GM10248 (cell line): ENCODE measurements at regions of chr13 and their contacts with region 1.

Region 1: GRCh38 chr13:36981156-36981743 is 17.9 kb downstream of the ALG5 start:
- DNase-seq: peak; percentile 35
- CTCF ChIP-seq: peak; percentile 52

Region 2: GRCh38 chr13:36420437-36420891 is 560.8 kb before region 1 on chr13:
- CTCF ChIA-PET with region 1: interaction called, 16 read pairs
- POLR2A ChIA-PET with region 1: no interaction called
- DNase-seq: peak; percentile 63
- CTCF ChIP-seq: peak; percentile 83

Region 3: DNA sequence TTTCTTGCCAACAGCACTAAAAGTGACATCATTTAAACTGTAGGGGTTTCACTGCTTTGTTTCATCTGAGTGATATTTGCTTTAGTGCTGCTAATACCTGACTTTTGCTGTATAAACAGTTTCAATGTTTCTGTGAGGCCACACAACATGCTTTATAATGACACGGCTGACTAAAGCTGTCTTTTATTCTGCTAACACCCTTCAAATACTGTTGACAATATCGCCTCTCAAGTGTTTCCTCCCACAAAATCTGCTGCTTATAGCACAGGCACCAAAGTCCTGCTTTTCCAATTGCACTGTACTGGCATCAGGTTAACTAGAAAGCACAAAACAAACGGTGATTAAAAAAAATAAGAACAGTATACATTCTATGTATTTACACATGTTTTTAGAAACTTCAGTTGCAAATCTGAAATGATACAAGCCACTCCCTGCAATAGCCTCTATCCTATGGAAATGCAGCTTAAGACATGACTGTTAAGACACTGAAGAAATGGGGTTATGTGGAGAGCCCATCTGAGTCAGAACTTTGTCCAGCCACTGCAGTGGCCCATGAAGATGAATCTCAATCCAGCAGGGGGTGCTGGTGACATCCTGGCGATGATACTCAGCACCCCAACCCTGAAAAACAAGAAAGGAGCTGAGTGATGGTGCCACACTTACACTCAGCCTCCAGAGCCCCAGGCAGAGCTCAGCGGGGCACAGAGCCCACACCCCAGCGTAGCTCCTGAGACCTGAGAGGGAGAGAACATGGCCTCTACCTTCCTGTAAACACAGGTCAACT is 132.9 kb before region 1 on chr13:
- CTCF ChIA-PET with region 1: interaction called, 16 read pairs
- POLR2A ChIA-PET with region 1: no interaction called
- DNase-seq: no peak
- CTCF ChIP-seq: peak; percentile 21

Region 4: GRCh38 chr13:36858290-36858689 is 123.0 kb before region 1 on chr13:
- CTCF ChIA-PET with region 1: interaction called, 24 read pairs
- POLR2A ChIA-PET with region 1: no interaction called
- DNase-seq: peak; percentile 39
- CTCF ChIP-seq: peak; percentile 55

Region 5: GRCh38 chr13:36965773-36966172 is 15.5 kb before region 1 on chr13:
- CTCF ChIA-PET with region 1: interaction called, 21 read pairs
- POLR2A ChIA-PET with region 1: no interaction called
- DNase-seq: no peak
- CTCF ChIP-seq: no peak

Region 6: GRCh38 chr13:36992340-36992739 is 11.1 kb after region 1 on chr13:
- CTCF ChIA-PET with region 1: interaction called, 30 read pairs
- POLR2A ChIA-PET with region 1: no interaction called
- DNase-seq: no peak
- CTCF ChIP-seq: no peak

Region 7: GRCh38 chr13:36999054-36999714 is 17.9 kb after region 1 on chr13 and contains the start of gene ALG5:
- CTCF ChIA-PET with region 1: interaction called, 27 read pairs
- POLR2A ChIA-PET with region 1: no interaction called
- DNase-seq: peak; percentile 90
- CTCF ChIP-seq: peak; percentile 99

Region 8: GRCh38 chr13:38321654-38322053 is 1340.4 kb after region 1 on chr13:
- CTCF ChIA-PET with region 1: no interaction called
- POLR2A ChIA-PET with region 1: no interaction called
- DNase-seq: no peak
- CTCF ChIP-seq: no peak